ENCODE measurements at regions of chr11 and their contacts with region 1.

Region 1: DNA sequence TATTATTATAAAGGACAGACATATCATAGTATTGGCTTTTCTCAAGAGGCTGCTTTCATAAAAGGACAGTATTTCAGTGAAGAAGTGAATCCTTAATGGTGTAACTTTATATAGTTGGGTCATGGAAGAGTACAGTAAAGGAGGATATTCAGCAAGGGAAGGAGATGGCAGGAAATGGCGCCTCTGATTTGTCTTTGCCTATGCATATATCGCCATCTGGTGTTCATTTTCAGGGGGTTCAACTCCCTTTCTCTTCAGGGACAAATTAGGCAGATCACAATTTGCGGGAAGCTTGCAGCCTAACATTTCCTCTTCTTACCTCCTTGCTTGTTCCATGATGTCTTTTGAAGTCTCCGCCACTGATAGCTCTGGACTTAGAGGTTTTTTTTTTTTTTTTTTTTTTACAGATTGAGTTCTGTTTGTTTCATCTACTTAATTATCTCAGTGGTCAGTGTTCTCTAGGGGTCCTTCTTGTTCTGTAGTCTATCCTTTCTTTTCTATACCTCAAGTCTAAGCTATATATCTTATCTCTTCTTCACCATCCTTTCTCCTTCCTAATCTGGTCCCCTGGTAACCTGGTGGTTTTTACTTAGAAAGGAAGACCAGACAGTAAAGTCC is 21.8 kb upstream of the RRM1 start:
- DNase-seq: no peak
- H3K4me3 ChIP-seq: no peak overlapping the region
- CTCF ChIP-seq: peak; percentile 72

Region 2: GRCh38 chr11:3807909-3808860 is 264.6 kb before region 1 on chr11 and contains the start of gene PGAP2:
- CTCF ChIA-PET with region 1: interaction called, 73 read pairs
- POLR2A ChIA-PET with region 1: no interaction called
- DNase-seq: no peak
- H3K4me3 ChIP-seq: peak within 1 kb of the TSS; percentile 77
- CTCF ChIP-seq: peak; percentile 81

Region 3: GRCh38 chr11:3867209-3868091 is 205.3 kb before region 1 on chr11:
- CTCF ChIA-PET with region 1: interaction called, 19 read pairs
- POLR2A ChIA-PET with region 1: no interaction called
- DNase-seq: no peak
- H3K4me3 ChIP-seq: no peak overlapping the region
- CTCF ChIP-seq: no peak

Region 4: GRCh38 chr11:3905080-3905953 is 167.5 kb before region 1 on chr11:
- CTCF ChIA-PET with region 1: interaction called, 10 read pairs
- POLR2A ChIA-PET with region 1: no interaction called
- DNase-seq: peak; percentile 38
- H3K4me3 ChIP-seq: no peak overlapping the region
- CTCF ChIP-seq: no peak

Region 5: DNA sequence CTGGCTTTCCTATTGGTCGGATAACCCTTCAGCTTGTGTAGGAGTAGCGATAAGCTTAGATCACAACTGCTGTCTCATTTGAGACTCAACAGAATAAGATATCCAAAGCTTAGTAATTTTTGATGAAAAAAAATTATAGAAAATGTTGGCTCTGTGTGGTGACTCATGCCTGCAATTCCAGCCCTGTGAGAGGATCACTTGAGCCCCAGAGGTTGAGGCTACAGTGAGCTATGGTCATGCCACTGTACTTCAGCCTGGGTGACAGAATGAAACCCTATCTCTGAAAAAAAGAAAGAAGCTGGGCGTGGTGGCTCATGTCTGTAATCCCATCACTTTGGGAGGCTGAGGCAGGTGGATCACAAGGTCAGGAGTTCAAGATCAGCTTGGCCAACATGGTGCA is 33.8 kb before region 1 on chr11:
- CTCF ChIA-PET with region 1: interaction called, 29 read pairs
- POLR2A ChIA-PET with region 1: no interaction called
- DNase-seq: no peak
- H3K4me3 ChIP-seq: no peak overlapping the region
- CTCF ChIP-seq: no peak

Region 6: GRCh38 chr11:4087551-4087950 is 14.8 kb after region 1 on chr11:
- CTCF ChIA-PET with region 1: interaction called, 108 read pairs
- POLR2A ChIA-PET with region 1: no interaction called
- DNase-seq: no peak
- H3K4me3 ChIP-seq: no peak overlapping the region
- CTCF ChIP-seq: peak; percentile 21

Region 7: DNA sequence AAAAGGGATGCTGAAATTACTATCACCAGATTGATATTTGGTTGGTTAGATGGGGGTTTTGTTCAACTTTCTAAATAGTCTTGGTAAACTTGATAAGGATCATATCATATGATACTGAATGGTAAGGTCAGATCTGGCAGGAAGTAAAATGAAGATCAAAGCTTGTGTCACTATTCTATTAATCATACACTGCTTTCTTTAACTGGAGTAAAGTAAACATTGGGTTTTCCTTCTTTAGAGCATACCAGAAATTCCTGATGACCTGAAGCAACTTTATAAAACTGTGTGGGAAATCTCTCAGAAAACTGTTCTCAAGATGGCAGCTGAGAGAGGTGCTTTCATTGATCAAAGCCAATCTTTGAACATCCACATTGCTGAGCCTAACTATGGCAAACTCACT is 62.1 kb after region 1 on chr11:
- CTCF ChIA-PET with region 1: no interaction called
- POLR2A ChIA-PET with region 1: no interaction called
- DNase-seq: no peak
- H3K4me3 ChIP-seq: no peak overlapping the region
- CTCF ChIP-seq: no peak

Region 8: DNA sequence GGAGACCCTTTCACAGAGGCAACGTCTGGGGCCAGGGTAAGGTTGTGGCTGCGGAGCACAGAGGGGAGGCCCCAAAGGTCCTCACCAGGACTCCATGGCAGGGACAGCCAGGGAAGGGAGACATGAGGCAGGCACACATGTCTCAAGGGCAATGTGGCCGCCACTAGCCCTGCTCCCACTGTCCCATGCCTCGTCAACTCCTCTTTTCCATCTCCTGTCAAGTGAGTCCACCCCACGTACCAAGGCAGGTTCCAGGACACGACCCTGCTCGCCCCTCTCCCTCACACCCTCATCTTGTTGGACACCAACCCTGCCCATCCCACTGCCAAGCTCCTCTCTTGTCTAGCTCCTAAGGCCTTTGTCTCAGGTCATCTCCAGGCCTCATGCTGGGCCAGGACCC is 95.0 kb after region 1 on chr11:
- CTCF ChIA-PET with region 1: no interaction called
- POLR2A ChIA-PET with region 1: no interaction called
- DNase-seq: no peak
- H3K4me3 ChIP-seq: no peak overlapping the region
- CTCF ChIP-seq: no peak